Transverse colon (tissue), 4 donors: ENCODE measurements at regions of chr18 and their contacts with region 1.

Region 1: DNA sequence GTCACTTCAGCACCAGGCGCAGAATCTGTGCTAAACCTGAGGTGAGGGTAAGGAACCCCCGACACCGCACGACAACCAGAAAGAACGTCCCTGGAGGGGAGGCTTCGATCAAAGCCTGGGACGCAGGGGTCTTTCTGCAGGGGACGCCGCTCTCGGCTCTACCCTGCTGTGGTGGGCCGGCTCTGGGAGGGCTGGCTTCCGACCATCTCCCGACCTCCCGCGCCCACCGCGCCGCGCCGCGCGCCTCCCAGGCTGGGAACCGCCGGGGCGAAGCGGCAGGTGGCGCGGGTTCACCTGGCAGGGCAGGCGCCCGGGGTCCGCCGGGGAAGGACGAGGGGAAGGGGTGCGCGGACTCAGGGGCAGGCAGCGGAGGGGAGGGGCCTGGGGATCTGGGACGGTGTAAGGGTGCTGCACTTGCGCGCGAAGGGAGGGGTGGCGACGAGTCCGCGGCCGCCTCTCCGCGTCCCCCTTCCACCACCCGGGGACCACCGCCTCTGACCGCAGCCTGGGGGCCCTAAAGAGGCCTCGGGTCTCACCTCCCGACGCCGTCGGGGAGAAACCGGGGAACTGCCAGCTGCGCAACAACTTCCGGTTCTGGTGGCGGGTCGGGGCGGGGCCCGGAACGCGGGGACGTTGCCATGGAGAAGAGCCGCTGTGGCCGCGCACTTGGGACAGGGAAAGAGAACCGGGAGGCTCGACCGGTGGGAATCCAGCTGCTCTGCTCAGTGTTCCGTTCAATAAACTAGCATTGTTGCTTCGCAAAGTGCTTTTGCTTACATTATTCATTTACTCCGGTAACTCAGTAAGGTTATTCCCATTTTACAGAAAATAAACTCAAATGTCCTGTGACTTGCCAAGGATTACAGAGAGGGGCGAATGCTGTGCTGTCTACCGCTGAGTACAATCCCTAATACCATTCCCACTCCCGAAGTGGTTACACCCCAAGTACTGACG is at the start of gene ZNF396:
- DNase-seq: peak; percentile 89
- H3K4me3 ChIP-seq: peak within 1 kb of the TSS; percentile 76 to 97 (median 89)
- H3K27ac ChIP-seq: peak within 1 kb of the TSS; percentile 65 to 81 (median 76)
- H3K4me1 ChIP-seq: peaks cover 0 to 11% (median 3%) of the 10 kb centered on the region in 4 donors
- H3K27me3 ChIP-seq: peaks cover 10% of the 10 kb centered on the region
- CTCF ChIP-seq: no peak
- EP300 ChIP-seq: no peak
- POLR2A ChIP-seq: peak; percentile 45
- total RNA-seq, gene ZNF396: 2.7 to 11.6 (median 3.3) TPM in 3 of 4 donors, not detected in the other

Region 2: DNA sequence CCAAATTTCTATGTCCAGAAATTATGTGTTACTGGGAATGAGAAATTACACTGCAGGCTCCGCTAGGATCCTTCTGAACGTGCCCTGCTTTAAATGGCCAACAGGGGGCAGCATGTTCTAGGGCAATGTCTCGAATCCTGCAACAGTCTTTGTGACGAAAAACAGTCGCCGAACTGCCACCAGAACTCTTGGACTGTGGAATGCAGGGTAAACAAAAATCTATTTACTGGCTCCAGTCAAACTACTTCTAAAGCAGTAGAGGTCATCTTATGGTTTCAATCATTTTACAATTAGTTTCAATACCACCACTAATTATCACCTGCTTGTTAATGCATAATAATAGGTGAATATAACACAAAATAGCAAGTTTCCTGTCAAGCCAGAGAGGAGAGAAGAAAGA is 146.0 kb before region 1 on chr18:
- in situ Hi-C with region 1: loop called in 1 of 4 experiments (anchors 10 kb)
- intact Hi-C with region 1: no loop called
- DNase-seq: peak; percentile 87
- H3K4me3 ChIP-seq: no peak overlapping the region
- H3K27ac ChIP-seq: no peak overlapping the region
- H3K4me1 ChIP-seq: peaks cover 0 to 5% (median 2%) of the 10 kb centered on the region in 4 donors
- H3K27me3 ChIP-seq: no peaks in the 10 kb centered on the region
- CTCF ChIP-seq: peak; percentile 87 to 96 (median 91)
- EP300 ChIP-seq: no peak
- POLR2A ChIP-seq: no peak

Region 3: DNA sequence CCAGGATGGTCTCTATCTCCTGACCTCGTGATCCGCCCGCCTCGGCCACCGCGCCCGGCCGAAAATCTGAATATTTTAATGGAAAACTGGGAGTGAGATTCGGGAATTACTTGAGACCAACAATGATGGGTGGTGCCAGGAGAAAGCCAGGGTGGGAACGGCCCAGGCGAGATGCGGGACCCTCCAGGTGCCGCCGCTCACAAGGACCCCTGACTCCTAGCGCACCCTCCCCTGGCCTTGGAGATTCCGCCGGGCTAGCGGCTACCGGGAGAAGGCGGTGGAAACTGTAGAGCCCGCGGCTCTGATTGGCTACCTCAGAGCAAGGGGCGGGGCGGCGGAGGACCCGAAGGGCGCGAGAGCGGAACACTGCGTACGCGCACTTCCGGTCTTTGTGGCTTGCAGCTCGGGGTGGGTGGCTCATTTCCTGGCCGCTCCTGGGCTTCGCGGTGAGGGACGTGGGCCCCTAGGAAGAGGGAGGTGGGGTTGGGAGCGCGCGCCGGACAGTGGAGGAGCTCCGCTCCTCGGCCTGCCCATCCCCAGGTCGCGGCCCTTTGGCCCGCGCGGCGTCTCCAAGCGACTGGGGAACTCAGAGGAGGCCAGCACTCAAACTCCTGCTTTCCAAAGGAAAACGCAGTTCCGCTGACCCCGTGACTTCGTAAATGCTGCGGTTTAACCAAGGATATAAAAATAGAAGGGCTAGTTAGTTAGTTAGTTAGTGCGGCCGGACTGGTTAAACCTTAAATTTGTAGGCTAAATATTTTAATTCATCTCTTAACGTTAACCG is 136.2 kb before region 1 on chr18 and contains the start of gene ZNF397:
- in situ Hi-C with region 1: loop called in 1 of 4 experiments (anchors 10 kb)
- intact Hi-C with region 1: no loop called
- DNase-seq: peak; percentile 99
- H3K4me3 ChIP-seq: peak within 1 kb of the TSS; percentile 60 to 80 (median 71)
- H3K27ac ChIP-seq: peak within 1 kb of the TSS; percentile 93 to 96 (median 95)
- H3K4me1 ChIP-seq: peaks cover 3 to 17% (median 11%) of the 10 kb centered on the region in 4 donors
- H3K27me3 ChIP-seq: no peaks in the 10 kb centered on the region
- CTCF ChIP-seq: no peak
- EP300 ChIP-seq: no peak
- POLR2A ChIP-seq: peak; percentile 94
- total RNA-seq, gene ZNF397: 21.8 to 60.6 (median 32.0) TPM